OCI-LY7 (cell line): ENCODE measurements at regions of chr7 and their contacts with region 1.

Region 1: DNA sequence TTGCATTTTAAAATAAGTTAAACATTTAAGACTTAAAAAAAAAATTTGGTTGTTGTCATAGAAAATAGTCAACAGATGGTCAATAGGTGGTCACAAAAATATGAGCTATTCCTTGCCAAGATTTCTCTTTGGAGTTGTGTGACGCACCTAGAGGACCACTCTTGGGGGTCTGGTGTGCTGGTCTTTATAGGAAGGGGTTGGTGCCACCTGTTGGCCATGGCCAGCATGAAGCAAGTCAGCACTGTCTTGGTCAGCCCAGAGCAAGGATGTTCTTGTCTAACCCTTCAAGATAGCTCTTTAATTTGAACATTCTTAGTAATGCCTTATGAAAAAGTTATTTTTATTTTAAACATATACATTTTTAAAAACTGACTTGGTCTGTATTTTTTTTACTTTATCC is 267.9 kb upstream of the CNTNAP2 start:
- DNase-seq: peak; percentile 69
- H3K4me3 ChIP-seq: no peak overlapping the region
- H3K27ac ChIP-seq: no peak overlapping the region
- H3K4me1 ChIP-seq: peaks cover 38% of the 10 kb centered on the region
- CTCF ChIP-seq: peak; percentile 85

Region 2: DNA sequence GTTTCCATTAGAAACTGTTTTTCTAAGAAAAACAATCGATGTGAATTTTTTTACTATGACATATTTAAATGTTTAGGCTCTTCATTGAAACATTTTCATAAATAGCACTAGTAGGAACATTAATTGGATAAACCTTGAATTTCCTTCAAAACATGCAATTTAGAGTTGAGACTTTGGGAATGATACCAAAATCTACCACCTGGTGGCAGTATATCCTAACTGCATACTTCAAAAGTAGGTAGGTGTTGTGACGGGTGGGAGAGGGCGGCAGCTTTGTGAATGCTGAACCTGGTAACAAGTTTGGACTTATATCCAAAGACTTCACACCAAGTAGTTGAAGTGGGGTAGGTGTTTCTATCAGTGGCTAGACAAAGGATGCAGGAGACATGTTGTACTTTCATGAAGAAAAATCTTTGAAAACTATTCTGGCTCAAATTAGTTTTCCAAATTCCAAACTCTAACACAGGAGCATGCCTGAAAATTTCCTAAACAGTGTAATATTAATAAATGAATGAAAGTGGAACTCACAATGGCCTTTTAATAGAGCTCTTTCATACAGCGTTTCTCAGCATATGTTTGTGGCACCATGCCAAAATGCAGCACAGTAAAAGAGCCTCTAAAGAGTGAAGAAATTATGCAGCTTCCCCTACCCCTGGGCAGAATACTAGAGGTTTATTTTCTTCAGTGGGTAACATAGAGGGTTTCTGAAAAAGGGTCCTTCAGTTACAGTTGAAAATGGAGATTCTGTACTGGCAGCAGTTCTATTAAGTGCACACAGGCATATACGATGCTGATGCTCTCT is 811.9 kb before region 1 on chr7:
- CTCF ChIA-PET with region 1: no interaction called
- POLR2A ChIA-PET with region 1: no interaction called
- intact Hi-C with region 1: loop called (anchors 10 kb)
- DNase-seq: peak; percentile 65
- H3K4me3 ChIP-seq: no peak overlapping the region
- H3K27ac ChIP-seq: no peak overlapping the region
- H3K4me1 ChIP-seq: no peaks in the 10 kb centered on the region
- CTCF ChIP-seq: peak; percentile 94

Region 3: GRCh38 chr7:145655666-145656065 is 193.0 kb before region 1 on chr7:
- CTCF ChIA-PET with region 1: no interaction called
- POLR2A ChIA-PET with region 1: no interaction called
- intact Hi-C with region 1: loop called (anchors 5 kb)
- DNase-seq: no peak
- H3K4me3 ChIP-seq: no peak overlapping the region
- H3K27ac ChIP-seq: no peak overlapping the region
- H3K4me1 ChIP-seq: no peaks in the 10 kb centered on the region
- CTCF ChIP-seq: no peak

Region 4: DNA sequence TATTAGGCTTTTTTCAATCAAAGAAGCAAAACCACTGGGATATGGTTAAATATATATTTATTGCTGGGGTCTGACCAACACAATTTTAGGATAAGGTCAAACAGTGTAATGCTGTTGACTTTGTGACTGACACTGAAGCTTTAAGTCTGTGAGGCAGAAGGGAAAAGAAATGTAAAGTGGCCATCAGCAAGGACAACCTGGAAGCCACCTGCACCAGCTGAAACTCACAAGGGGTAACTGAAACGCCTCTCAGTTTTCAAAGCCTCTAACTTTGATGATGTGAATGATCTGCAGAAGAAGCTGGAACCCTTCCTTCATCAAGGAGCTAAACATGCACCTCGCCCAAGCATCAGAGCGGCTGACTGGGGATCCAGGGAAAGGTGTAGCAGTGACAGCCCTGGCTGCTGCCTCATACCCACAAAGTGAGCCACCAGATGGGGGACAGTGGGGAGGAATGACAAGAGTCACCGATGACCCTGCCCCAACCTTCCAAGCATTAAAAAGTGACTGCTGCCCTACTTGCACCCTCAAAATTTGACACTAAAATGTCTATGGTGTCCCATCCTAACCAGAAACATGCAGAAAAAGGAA is 17.0 kb before region 1 on chr7:
- CTCF ChIA-PET with region 1: no interaction called
- POLR2A ChIA-PET with region 1: interaction called, 14 read pairs
- intact Hi-C with region 1: no loop called
- DNase-seq: no peak
- H3K4me3 ChIP-seq: no peak overlapping the region
- H3K27ac ChIP-seq: no peak overlapping the region
- H3K4me1 ChIP-seq: peaks cover 3% of the 10 kb centered on the region
- CTCF ChIP-seq: no peak

Region 5: GRCh38 chr7:145957160-145957890 is 108.6 kb after region 1 on chr7:
- CTCF ChIA-PET with region 1: no interaction called
- POLR2A ChIA-PET with region 1: interaction called, 6 read pairs
- intact Hi-C with region 1: loop called (anchors 2 kb)
- DNase-seq: peak; percentile 88
- H3K4me3 ChIP-seq: peak overlapping the region; percentile 47
- H3K27ac ChIP-seq: peak overlapping the region; percentile 100
- H3K4me1 ChIP-seq: peaks cover 44% of the 10 kb centered on the region
- CTCF ChIP-seq: no peak

Region 6: DNA sequence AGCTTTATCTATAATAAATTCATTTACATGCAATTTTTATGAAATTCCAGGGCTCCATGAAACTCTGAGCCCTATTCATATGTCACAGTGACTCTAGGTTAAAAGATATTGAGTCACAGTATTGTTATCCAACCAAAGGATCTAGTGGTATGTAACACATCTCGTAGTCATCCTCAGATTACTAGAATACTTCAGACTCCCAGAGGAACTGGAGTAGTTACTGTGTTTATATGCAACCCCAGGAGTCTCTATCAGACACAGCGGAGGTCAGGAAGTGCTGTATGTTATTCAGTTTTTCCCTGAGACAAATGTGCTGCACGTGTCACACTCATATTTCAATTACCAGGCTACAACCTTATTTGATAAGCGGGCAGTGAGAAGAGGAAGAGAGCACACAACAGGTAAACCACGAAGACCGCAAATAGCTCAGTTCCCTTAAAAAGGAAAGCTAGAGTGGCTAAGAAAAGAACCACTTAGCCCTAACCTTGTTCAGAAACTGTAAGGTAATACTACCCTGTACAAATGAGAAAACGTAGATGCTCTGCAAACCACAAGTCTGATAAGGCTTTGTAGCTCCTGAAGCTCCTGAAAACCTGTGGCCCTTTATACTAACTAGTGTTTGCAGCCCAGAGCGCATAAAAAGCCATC is 153.9 kb after region 1 on chr7:
- CTCF ChIA-PET with region 1: no interaction called
- POLR2A ChIA-PET with region 1: interaction called, 4 read pairs
- intact Hi-C with region 1: loop called (anchors 5 kb)
- DNase-seq: peak; percentile 95
- H3K4me3 ChIP-seq: peak overlapping the region; percentile 24
- H3K27ac ChIP-seq: peak overlapping the region; percentile 92
- H3K4me1 ChIP-seq: peaks cover 81% of the 10 kb centered on the region
- CTCF ChIP-seq: no peak

Region 7: DNA sequence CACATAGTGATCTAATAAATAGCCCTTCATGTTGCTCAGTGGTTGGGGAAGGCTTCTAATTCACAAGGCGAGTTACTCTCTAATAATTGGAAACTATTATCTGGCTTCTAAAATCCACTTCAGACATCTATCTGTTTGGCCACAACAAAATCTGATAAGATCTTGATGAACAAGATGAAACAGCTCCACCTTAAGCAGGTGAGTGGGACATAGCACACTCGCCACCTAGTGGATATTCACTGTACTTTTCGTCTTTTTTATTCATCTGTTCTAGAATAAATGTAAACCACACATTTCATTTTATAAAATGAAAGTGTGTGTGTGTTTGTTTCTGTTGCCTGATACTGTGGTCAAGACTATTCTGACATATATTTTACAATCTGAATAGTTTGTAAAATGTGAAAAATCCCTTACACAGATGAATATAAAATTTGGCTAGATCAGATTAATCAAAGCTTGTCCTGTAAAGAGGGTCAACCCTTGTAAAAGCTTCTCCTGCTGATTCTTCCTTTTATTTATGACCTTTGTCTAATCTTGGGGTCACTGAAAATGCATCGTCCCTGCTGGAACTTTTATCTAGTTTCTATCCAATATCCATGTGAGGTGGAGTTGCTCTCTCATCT is 241.4 kb after region 1 on chr7:
- CTCF ChIA-PET with region 1: no interaction called
- POLR2A ChIA-PET with region 1: interaction called, 12 read pairs
- intact Hi-C with region 1: loop called (anchors 2 kb)
- DNase-seq: peak; percentile 83
- H3K4me3 ChIP-seq: no peak overlapping the region
- H3K27ac ChIP-seq: peak overlapping the region; percentile 28
- H3K4me1 ChIP-seq: peaks cover 22% of the 10 kb centered on the region
- CTCF ChIP-seq: peak; percentile 98